CD4-positive, alpha-beta T cell (primary cell): ENCODE measurements at regions of chr5 and their contacts with region 1.

Region 1: GRCh38 chr5:142012792-142013388 is at the start of gene GNPDA1:
- DNase-seq: peak; percentile 24 to 87 (median 57)
- ATAC-seq: peak; percentile 60
- H3K4me3 ChIP-seq: peak within 1 kb of the TSS; percentile 86
- H3K4me3 Mint-ChIP-seq: peak within 1 kb of the TSS; percentile 90
- H3K27ac ChIP-seq: peak within 1 kb of the TSS; percentile 60 to 73
- H3K27ac Mint-ChIP-seq: peak within 1 kb of the TSS; percentile 89
- H3K4me1 ChIP-seq: peaks cover 67% of the 10 kb centered on the region
- H3K4me1 Mint-ChIP-seq: peaks cover 84% of the 10 kb centered on the region
- H3K27me3 ChIP-seq: no peaks in the 10 kb centered on the region
- H3K27me3 Mint-ChIP-seq: no peaks in the 10 kb centered on the region
- CTCF ChIP-seq: no peak
- total RNA-seq, gene GNPDA1: 5.8 to 6.6 TPM

Region 2: DNA sequence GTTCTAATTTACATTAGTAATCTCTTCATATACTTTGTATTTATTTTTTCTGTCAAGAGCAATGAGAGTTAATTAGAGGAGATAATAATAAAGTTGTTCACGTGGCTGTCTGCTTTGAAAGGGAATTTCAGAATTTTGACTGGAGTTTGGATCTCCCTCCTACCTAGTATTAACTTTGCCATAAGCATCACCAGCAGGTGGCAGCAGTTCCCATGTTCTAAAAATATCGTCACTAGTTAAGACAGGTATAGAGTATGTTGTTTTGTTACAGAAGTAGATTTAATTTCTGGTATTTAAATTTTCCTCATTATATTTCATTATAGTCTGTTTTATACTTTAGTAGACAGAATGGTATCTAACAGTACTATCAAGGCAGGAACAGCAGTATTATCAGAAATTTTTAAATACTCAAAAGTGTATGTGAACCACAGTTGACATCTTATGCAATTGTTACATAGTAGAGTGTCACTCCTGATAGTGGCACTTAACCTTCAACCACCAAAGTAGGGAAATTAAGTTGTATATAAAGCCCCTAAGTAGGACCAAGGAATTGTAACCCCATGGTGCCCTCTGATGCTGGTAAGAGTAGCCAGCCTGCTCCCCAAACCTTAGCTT is 20.4 kb before region 1 on chr5:
- CTCF ChIA-PET with region 1: interaction called, 12 read pairs
- POLR2A ChIA-PET with region 1: interaction called, 4 read pairs
- intact Hi-C with region 1: loop called (anchors 1 to 2 kb)
- DNase-seq: peak; percentile 61 to 91 (median 78)
- ATAC-seq: peak; percentile 88
- H3K4me3 ChIP-seq: no peak overlapping the region
- H3K4me3 Mint-ChIP-seq: no peak overlapping the region
- H3K27ac ChIP-seq: no peak overlapping the region
- H3K27ac Mint-ChIP-seq: no peak overlapping the region
- H3K4me1 ChIP-seq: no peaks in the 10 kb centered on the region
- H3K4me1 Mint-ChIP-seq: peaks cover 6% of the 10 kb centered on the region
- H3K27me3 ChIP-seq: no peaks in the 10 kb centered on the region
- H3K27me3 Mint-ChIP-seq: no peaks in the 10 kb centered on the region
- CTCF ChIP-seq: peak; percentile 93

Region 3: GRCh38 chr5:142024771-142025304 is 11.9 kb after region 1 on chr5:
- CTCF ChIA-PET with region 1: interaction called, 13 read pairs
- POLR2A ChIA-PET with region 1: interaction called, 32 read pairs
- intact Hi-C with region 1: loop called in 1 of 2 experiments (anchors 1 kb)
- DNase-seq: peak; percentile 62 to 91 (median 80)
- ATAC-seq: peak; percentile 100
- H3K4me3 ChIP-seq: peak overlapping the region; percentile 53
- H3K4me3 Mint-ChIP-seq: peak overlapping the region; percentile 83
- H3K27ac ChIP-seq: peak overlapping the region; percentile 72 to 88
- H3K27ac Mint-ChIP-seq: peak overlapping the region; percentile 93
- H3K4me1 ChIP-seq: peaks cover 8% of the 10 kb centered on the region
- H3K4me1 Mint-ChIP-seq: peaks cover 25% of the 10 kb centered on the region
- H3K27me3 ChIP-seq: no peaks in the 10 kb centered on the region
- H3K27me3 Mint-ChIP-seq: no peaks in the 10 kb centered on the region
- CTCF ChIP-seq: no peak

Region 4: GRCh38 chr5:142145106-142145900 is 132.4 kb after region 1 on chr5:
- CTCF ChIA-PET with region 1: interaction called, 18 read pairs
- POLR2A ChIA-PET with region 1: interaction called, 11 read pairs
- intact Hi-C with region 1: loop called in 1 of 2 experiments (anchors 1 kb)
- DNase-seq: peak; percentile 28 to 79 (median 52)
- ATAC-seq: peak; percentile 74
- H3K4me3 ChIP-seq: no peak overlapping the region
- H3K4me3 Mint-ChIP-seq: no peak overlapping the region
- H3K27ac ChIP-seq: no peak overlapping the region
- H3K27ac Mint-ChIP-seq: no peak overlapping the region
- H3K4me1 ChIP-seq: no peaks in the 10 kb centered on the region
- H3K4me1 Mint-ChIP-seq: peaks cover 5% of the 10 kb centered on the region
- H3K27me3 ChIP-seq: no peaks in the 10 kb centered on the region
- H3K27me3 Mint-ChIP-seq: no peaks in the 10 kb centered on the region
- CTCF ChIP-seq: peak; percentile 75

Region 5: DNA sequence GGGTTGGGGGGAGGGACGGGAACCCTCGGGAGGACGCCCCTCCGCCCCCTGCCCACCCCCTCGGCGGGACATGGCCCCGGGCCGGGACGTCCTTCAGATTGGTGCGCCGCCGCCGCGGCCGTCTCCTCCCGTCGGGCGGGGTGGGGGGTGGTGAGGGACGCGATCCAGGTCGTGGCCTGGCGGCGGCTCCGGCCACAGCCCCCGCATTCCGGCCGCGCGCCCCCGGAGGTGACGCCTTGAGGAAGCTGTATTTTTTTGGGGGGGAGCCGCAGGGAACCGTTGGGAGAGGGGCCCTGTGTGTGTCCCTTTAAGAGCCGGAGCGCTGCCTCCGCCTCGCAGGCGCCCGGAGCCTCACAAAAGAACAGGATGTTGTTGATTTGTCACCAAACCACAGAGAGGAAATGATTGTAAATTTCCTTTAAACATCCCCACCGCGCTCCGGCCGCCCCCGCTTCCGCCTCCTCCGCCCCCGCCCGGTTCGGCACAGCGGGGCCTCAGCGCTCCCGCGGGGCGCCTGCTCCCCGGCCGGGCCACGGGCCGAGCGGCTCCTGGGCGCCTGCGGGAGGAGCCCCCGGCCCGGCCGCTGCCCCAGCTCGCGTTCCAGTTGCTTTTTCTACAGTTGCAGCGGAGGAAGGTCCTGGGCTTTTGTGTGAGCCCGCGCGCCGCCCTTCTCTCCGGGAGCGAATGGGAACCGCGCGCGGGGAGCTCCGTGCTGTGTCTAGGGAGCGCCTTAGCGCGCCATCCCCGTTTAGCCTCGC is 344.0 kb after region 1 on chr5:
- CTCF ChIA-PET with region 1: no interaction called
- POLR2A ChIA-PET with region 1: interaction called, 3 read pairs
- intact Hi-C with region 1: loop called in 1 of 2 experiments (anchors 10 kb)
- DNase-seq: peak; percentile 72 to 94 (median 80)
- ATAC-seq: peak; percentile 85
- H3K4me3 ChIP-seq: peak overlapping the region; percentile 65
- H3K4me3 Mint-ChIP-seq: peak overlapping the region; percentile 93
- H3K27ac ChIP-seq: peak overlapping the region in 1 of 2 donors; percentile 56
- H3K27ac Mint-ChIP-seq: peak overlapping the region; percentile 73
- H3K4me1 ChIP-seq: peaks cover 42% of the 10 kb centered on the region
- H3K4me1 Mint-ChIP-seq: peaks cover 67% of the 10 kb centered on the region
- H3K27me3 ChIP-seq: no peaks in the 10 kb centered on the region
- H3K27me3 Mint-ChIP-seq: no peaks in the 10 kb centered on the region
- CTCF ChIP-seq: no peak

Region 6: DNA sequence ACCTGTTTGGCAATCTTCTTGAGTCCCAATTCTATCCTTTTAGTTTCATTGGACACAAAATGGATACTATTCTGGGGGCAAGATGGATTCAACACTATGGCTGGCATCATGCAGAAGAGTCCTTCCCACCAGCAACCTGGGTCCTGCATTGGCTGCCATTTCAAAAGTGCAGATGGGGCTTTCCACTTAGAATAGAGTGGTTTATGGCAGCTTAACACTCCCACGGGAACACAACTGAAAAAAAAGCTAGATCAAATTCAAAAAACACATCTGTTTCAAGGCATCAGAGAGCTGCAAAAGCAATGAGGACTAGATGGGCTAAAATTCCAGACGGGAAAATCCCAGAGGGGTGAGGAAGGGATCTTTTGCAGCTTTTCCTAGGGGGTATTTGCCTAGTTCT is 1787.8 kb after region 1 on chr5:
- CTCF ChIA-PET with region 1: no interaction called
- POLR2A ChIA-PET with region 1: no interaction called
- intact Hi-C with region 1: no loop called
- DNase-seq: no peak
- ATAC-seq: no peak
- H3K4me3 ChIP-seq: no peak overlapping the region
- H3K4me3 Mint-ChIP-seq: no peak overlapping the region
- H3K27ac ChIP-seq: no peak overlapping the region
- H3K27ac Mint-ChIP-seq: no peak overlapping the region
- H3K4me1 ChIP-seq: no peaks in the 10 kb centered on the region
- H3K4me1 Mint-ChIP-seq: no peaks in the 10 kb centered on the region
- H3K27me3 ChIP-seq: no peaks in the 10 kb centered on the region
- H3K27me3 Mint-ChIP-seq: peaks cover 8% of the 10 kb centered on the region
- CTCF ChIP-seq: no peak